Dendritic cell treated with granulocyte-macrophage colony-stimulating factor and Interleukin-4, amounts not matched to agents 40 ng/mL and 50 ng/mL, for 4 days (primary cell): ENCODE measurements at regions of chr14 and their contacts with region 1.

Region 1: DNA sequence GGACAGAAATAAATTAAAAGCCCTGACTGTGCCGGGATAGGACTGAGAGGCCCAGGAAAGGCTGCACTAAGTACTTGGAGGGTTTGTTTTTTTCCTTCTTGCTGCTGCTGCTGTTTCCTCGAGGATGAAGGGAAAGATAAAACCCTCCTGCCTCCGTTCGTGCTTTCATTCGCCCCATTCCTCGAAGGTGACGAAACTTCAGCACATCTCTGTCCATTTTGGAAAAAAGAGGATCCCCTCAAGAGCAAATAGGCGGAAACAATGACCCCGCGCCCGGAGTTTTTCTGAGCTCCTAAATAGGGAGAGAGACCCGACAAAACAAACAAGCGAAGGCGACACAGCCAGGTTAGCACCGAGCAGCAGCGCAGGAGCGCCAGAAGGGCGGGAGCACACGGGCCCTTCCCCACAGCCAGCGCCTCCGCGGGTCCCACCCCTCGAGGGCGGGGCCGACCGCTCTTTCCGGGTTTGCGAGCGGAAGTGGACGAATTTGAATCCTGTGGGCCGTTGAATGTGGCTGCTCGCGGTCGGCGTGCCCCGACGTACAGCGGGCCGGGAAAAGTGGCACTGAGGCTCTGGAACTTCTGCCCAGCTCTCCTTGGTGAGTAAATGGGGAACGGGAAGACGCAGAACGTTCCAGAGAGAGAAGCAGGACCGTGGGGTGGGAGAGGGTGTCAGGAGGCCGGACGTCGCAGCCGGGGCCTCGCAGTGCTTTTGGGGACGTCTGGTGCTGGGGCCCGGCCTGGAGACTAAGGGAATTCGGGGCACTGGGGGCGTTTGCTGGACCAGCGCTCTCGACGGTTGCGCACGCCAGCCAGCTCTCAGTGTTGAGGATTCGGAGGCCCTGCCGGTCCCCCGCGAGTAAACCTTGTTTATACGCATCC is at the start of gene G2E3:
- H3K4me3 Mint-ChIP-seq: peak within 1 kb of the TSS; percentile 100
- H3K27ac Mint-ChIP-seq: peak within 1 kb of the TSS; percentile 99
- H3K4me1 Mint-ChIP-seq: peaks cover 18% of the 10 kb centered on the region
- H3K27me3 Mint-ChIP-seq: peaks cover 2% of the 10 kb centered on the region

Region 2: GRCh38 chr14:30610787-30611343 is 52.0 kb after region 1 on chr14:
- intact Hi-C with region 1: loop called (anchors 5 kb)
- H3K4me3 Mint-ChIP-seq: no peak overlapping the region
- H3K27ac Mint-ChIP-seq: peak overlapping the region; percentile 32
- H3K4me1 Mint-ChIP-seq: peaks cover 22% of the 10 kb centered on the region
- H3K27me3 Mint-ChIP-seq: no peaks in the 10 kb centered on the region

Region 3: DNA sequence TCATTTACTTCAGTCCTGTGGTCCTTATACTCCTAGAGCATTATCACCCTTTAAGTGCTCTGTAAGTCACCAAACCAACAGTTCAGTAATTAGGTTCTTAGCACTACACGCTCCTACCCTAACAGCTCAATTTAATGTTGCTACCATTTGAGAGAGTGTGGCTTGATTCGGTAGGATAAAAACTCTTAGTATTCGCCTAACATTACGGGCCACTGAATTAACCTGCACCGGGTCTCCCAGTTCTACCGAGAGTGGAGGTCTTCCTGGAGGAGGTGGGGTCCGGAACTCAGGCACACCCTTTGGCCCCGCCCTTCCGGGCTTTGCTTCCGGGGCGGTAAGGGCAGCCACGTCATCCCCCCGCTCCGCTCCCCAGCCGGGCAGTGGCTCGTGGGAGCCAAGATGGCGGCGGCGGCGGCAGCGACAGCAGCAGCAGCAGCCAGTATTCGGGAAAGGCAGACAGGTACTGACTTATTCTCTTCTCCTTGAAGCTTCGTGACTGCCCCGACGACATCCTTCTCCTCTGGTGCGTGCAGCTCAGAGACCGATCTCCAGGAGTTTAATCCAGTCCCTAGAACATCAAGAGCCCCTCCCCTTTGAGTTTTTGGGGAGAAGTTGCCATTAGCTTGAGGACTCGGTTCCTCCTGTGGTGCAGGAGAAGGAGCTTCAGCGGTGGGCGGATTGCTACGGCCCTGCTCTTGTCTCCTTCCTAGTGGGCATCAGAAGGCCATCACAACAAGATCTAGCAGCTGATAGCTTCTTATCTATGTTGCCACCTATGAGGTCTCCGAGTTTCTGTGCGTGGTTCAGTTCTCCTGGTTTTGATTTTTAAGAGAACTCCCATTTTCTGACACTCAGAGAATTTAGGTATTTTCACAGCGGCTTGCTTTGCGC is 63.3 kb after region 1 on chr14 and contains the start of gene SCFD1:
- intact Hi-C with region 1: loop called (anchors 1 kb)
- H3K4me3 Mint-ChIP-seq: peak within 1 kb of the TSS; percentile 93
- H3K27ac Mint-ChIP-seq: peak within 1 kb of the TSS; percentile 94
- H3K4me1 Mint-ChIP-seq: peaks cover 13% of the 10 kb centered on the region
- H3K27me3 Mint-ChIP-seq: no peaks in the 10 kb centered on the region